ENCODE measurements at regions of chr4 and their contacts with region 1.

Region 1: GRCh38 chr4:82865592-82865991 is 25.4 kb downstream of the SEC31A start:
- DNase-seq: peak; percentile 49
- ATAC-seq: peak; percentile 69
- H3K4me3 Mint-ChIP-seq: peak overlapping the region; percentile 62
- H3K27ac Mint-ChIP-seq: peak overlapping the region; percentile 85
- H3K4me1 Mint-ChIP-seq: peaks cover 40% of the 10 kb centered on the region
- H3K27me3 Mint-ChIP-seq: no peaks in the 10 kb centered on the region

Region 2: DNA sequence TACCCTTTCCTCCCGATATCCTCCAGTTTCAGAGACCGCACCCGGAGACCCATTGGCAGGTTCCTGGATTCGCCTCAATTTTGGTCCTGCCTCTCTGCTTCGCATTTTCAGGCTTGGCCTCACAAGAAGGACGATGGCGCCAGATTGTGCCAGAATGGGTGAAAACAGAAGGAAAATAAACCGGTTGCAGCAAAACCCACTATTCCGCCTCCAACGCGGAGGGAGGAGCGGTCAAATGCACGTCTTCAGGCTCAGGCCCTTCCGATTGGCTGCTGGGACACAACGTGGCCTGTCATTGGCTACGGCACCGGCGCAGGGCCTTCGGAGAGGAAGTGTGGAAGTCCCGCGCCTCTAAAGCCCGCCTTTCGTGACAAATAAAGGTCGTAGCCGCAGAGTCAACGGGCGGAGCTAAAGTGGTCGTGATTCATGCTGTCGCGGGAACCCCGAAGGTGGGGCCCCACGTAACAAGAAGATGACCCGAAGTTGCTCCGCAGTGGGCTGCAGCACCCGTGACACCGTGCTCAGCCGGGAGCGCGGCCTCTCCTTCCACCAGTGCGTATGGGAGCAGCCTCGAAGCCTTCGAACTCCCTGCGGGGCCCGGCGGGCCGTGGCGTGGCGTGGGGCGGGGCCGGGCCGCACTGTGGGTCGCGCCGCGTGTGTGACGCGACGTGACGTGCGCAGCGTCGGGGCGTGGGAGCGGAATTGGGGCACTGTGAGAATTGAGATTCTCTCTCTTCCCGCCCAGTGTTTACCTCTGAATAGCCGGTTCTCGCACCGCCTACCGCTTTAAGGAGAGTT is 34.9 kb after region 1 on chr4 and contains the start of gene THAP9:
- CTCF ChIA-PET with region 1: interaction called, 11 read pairs
- POLR2A ChIA-PET with region 1: interaction called, 7 read pairs
- DNase-seq: peak; percentile 99
- ATAC-seq: peak; percentile 91
- H3K4me3 Mint-ChIP-seq: no peak within 1 kb of the TSS
- H3K27ac Mint-ChIP-seq: no peak within 1 kb of the TSS
- H3K4me1 Mint-ChIP-seq: peaks cover 45% of the 10 kb centered on the region
- H3K27me3 Mint-ChIP-seq: no peaks in the 10 kb centered on the region
- total RNA-seq, gene THAP9: 3.1 to 3.3 TPM